K562 (cell line): ENCODE measurements at regions of chr11 and their contacts with region 1.

Region 1: GRCh38 chr11:64204464-64204989 is 2.0 kb upstream of the FERMT3 start:
- DNase-seq: peak; percentile 79 to 96 (median 86)
- ATAC-seq: peak; percentile 63
- H3K4me3 ChIP-seq: no peak overlapping the region
- H3K27ac ChIP-seq: peak overlapping the region; percentile 29; the same call in 2 of the 3 replicates
- H3K4me1 ChIP-seq: peaks cover 36 to 60% of the 10 kb centered on the region in 2 experiments
- H3K27me3 ChIP-seq: no peaks in the 10 kb centered on the region
- CTCF ChIP-seq: peak; percentile 86 to 97 (median 95)
- EP300 ChIP-seq: peak; percentile 50; the same call in 1 of the 2 replicates
- POLR2A ChIP-seq: peak; percentile 56; the same call in 1 of the 2 replicates
- RAD21 ChIP-seq: peak; percentile 87 to 90

Region 2: DNA sequence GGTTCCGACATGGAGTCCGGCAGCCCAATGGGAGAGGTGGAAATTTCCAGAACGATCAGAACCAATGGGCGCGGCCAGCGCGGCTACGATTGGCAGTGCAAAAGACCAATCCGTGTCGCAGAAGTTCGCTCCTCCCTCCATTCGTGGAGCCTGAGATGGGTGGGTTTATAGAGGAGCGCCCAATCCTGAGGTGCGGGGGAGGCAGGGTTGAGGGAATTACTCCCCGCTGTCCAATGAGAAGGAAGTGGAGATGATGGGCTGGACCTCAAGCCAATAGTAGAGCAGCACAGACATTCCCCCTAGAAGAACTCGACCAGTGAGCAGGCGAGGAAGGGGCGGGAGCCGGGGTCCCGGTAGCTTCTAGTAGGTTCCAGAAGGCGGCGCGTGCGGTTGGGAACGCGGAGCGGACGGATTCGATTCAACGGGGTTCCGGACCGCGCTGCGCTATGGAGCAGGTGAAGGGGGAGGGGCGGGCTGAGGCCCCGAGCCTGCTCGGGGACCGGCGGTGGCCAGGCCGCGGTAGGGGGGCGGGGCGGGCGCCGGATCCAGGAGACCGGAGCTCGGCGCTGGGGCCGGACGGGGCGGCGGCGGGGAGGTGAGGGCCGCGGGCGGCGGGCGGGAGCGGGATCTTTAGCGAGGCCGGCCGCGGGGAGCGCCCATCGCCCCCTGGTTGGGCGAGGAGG is 18.6 kb before region 1 on chr11 and contains the start of gene STIP1:
- CTCF ChIA-PET with region 1: no interaction called
- POLR2A ChIA-PET with region 1: interaction called, 29 read pairs
- in situ Hi-C with region 1: no loop called
- intact Hi-C with region 1: no loop called
- DNase-seq: peak; percentile 91 to 99 (median 96)
- ATAC-seq: peak; percentile 89
- H3K4me3 ChIP-seq: peak within 1 kb of the TSS; percentile 70
- H3K27ac ChIP-seq: peak within 1 kb of the TSS; percentile 89
- H3K4me1 ChIP-seq: peaks cover 25 to 50% of the 10 kb centered on the region in 2 experiments
- H3K27me3 ChIP-seq: no peaks in the 10 kb centered on the region
- CTCF ChIP-seq: peak; percentile 58 to 70 (median 64); a peak in 5 of 6 replicates
- EP300 ChIP-seq: peak; percentile 59; the same call in 1 of the 2 replicates
- POLR2A ChIP-seq: no peak
- RAD21 ChIP-seq: no peak
- polyA plus RNA-seq, gene STIP1: 58.1 to 122 TPM

Region 3: DNA sequence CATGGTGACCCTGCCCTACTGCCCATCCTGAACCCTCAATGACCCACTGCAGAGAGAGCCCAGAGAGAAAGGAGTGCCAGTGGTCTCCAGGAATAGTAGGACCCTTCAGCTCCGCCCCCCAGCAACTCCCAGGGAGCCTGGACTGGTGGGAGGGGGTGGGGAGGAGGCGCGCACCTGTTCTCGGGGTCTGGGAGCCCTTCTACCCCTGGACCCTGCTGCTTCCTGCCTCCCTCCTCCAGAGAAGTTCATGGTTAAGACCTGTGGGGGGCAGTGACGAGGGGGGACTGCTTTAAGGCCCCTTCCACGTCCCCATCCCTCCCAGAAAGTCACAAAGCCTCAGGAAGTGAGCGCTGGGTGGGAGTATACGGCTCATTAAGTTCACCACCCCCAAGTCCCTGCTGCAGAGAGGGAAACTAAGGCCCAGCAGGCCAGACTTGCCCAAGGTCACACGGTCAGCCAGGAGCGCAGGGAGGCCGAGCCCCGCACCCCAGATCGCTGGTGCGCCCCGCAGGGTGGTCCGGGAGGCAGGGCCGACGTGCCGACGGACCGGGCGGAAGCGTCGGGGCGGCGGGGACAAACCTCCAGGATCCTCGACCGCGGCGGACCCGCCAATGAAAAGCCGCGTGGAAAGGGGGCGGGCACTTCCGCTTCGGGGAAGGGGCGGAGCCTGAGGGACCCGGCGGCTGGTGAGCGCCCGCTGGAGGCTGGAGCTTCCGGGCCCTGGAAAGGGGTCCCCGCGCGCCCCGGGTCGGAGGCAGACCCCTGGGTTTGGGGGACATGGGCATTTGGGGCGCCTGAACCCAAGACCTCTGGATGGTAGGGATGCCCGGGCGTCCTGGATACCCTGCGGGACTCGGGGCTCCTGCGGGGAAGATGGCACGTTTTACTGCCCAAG is 21.3 kb after region 1 on chr11 and contains the starts of genes NUDT22 and TRPT1:
- CTCF ChIA-PET with region 1: no interaction called
- POLR2A ChIA-PET with region 1: interaction called, 77 read pairs
- in situ Hi-C with region 1: no loop called
- intact Hi-C with region 1: loop called (anchors 2 kb)
- DNase-seq: peak; percentile 85 to 94 (median 90)
- ATAC-seq: peak; percentile 83
- H3K4me3 ChIP-seq: peak within 1 kb of the TSS; percentile 64
- H3K27ac ChIP-seq: peak within 1 kb of the TSS; percentile 93
- H3K4me1 ChIP-seq: peaks cover 8 to 72% of the 10 kb centered on the region in 2 experiments; a peak in 4 of 5 replicates
- H3K27me3 ChIP-seq: no peaks in the 10 kb centered on the region
- CTCF ChIP-seq: peak; percentile 19 to 38 (median 30); a peak in 3 of 6 replicates
- EP300 ChIP-seq: no peak
- POLR2A ChIP-seq: peak; percentile 81
- RAD21 ChIP-seq: peak in 1 of 2 experiments; percentile 7; a peak in 2 of 4 replicates
- polyA plus RNA-seq, gene NUDT22: 6.3 to 16.3 TPM
- polyA plus RNA-seq, gene TRPT1: 4.6 to 8.1 TPM

Region 4: GRCh38 chr11:64246871-64247728 is 42.6 kb after region 1 on chr11 and contains the start of gene PPP1R14B:
- CTCF ChIA-PET with region 1: no interaction called
- POLR2A ChIA-PET with region 1: interaction called, 11 read pairs
- in situ Hi-C with region 1: no loop called
- intact Hi-C with region 1: loop called (anchors 2 kb)
- DNase-seq: peak; percentile 72 to 93 (median 84)
- ATAC-seq: peak; percentile 78
- H3K4me3 ChIP-seq: peak within 1 kb of the TSS; percentile 98
- H3K27ac ChIP-seq: peak within 1 kb of the TSS; percentile 98
- H3K4me1 ChIP-seq: peaks cover 42 to 92% of the 10 kb centered on the region in 2 experiments
- H3K27me3 ChIP-seq: no peaks in the 10 kb centered on the region
- CTCF ChIP-seq: peak; percentile 15 to 29 (median 26); a peak in 3 of 6 replicates
- EP300 ChIP-seq: peak; percentile 24
- POLR2A ChIP-seq: peak; percentile 90
- RAD21 ChIP-seq: no peak
- polyA plus RNA-seq, gene PPP1R14B: 7.7 to 17.5 TPM

Region 5: DNA sequence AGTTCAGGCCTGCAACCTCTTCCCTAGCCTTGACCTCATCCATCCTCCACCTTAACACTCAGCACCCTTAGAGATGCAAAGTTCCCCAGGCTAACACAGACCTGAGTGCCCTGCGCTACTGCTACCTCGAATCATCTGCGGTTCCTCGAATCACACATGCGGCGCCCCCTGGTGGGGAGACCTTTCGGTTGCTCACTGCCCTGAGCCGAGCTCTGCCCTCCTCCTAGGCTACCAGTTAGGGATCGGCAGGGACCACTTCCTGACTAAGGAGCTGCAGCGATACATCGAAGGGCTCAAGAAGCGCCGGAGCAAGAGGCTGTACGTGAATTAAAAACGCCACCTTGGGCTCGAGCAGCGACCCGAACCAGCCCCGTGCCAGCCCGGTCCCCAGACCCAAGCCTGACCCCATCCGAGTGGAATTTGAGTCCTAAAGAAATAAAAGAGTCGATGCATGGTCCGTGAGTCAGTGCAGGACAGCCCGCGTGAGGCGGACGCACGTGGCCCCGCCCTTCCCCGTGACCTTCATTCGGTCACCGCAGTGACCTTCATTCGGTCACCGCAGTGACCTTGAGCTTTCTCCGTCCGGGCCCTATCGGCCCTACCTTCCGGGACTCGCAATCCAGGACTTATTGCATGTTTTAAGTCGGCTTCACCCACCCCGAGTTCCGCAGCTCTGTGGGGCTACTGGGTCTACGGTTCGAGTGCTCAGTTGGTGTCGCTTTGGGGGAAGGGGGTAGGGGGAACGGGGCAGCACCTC is 100.0 kb after region 1 on chr11:
- CTCF ChIA-PET with region 1: interaction called, 10 read pairs
- POLR2A ChIA-PET with region 1: interaction called, 68 read pairs
- in situ Hi-C with region 1: no loop called
- intact Hi-C with region 1: loop called (anchors 1 kb)
- DNase-seq: peak; percentile 64 to 95 (median 76)
- ATAC-seq: peak; percentile 69
- H3K4me3 ChIP-seq: peak overlapping the region; percentile 72
- H3K27ac ChIP-seq: peak overlapping the region; percentile 100
- H3K4me1 ChIP-seq: peaks cover 32 to 53% of the 10 kb centered on the region in 2 experiments
- H3K27me3 ChIP-seq: no peaks in the 10 kb centered on the region
- CTCF ChIP-seq: peak; percentile 84 to 94 (median 87)
- EP300 ChIP-seq: peak; percentile 19
- POLR2A ChIP-seq: peak; percentile 77
- RAD21 ChIP-seq: peak; percentile 60 to 65